Activated CD4-positive, alpha-beta T cell treated with anti-CD3 and anti-CD28 coated beads, Interleukin-2, amount 10 ng/mL, durations not matched to agents 24 days and 14 days (primary cell): ENCODE measurements at regions of chr3 and their contacts with region 1.

Region 1: GRCh38 chr3:17151598-17152373 is 267.0 kb downstream of the PLCL2 start:
- DNase-seq: peak; percentile 97
- H3K4me3 Mint-ChIP-seq: peak overlapping the region; percentile 80
- H3K27ac Mint-ChIP-seq: peak overlapping the region; percentile 93
- H3K4me1 Mint-ChIP-seq: peaks cover 66% of the 10 kb centered on the region
- H3K27me3 Mint-ChIP-seq: no peaks in the 10 kb centered on the region

Region 2: GRCh38 chr3:16906682-16907081 is 245.1 kb before region 1 on chr3:
- intact Hi-C with region 1: loop called (anchors 5 kb)
- DNase-seq: peak; percentile 75
- H3K4me3 Mint-ChIP-seq: peak overlapping the region; percentile 38
- H3K27ac Mint-ChIP-seq: no peak overlapping the region
- H3K4me1 Mint-ChIP-seq: peaks cover 61% of the 10 kb centered on the region
- H3K27me3 Mint-ChIP-seq: no peaks in the 10 kb centered on the region

Region 3: DNA sequence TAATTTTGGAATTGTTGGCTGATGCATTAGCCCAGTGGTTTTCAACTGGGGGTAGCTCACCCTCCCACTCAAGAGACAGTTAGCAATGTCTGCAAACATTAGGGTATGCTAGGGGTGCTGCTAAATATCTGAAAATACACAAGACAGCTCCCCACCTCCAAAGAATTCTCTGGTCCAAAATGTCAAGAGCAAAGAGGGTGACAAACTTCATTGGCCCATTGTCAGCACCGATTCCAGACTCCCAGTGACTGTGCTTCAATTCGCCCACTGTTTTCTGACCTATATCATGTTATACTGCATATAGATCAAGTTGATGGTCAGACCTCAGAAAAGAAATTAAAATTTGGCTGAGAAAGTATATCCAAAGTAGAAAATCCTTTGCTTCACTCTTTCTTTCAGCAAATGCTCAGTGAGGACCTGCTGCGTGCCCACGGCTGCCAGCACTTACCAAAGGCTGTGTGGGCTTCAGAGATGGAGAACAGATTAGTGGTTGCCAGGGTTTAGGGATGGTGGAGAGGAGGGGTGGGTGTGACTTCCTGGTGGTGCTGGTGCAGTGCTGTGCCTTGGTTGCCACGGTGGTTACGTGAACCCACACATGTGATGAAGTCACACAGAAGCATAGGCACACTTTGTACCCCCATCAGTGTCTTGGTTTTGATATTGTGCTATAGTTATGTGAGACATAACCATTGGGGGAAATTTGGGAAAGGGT is 63.0 kb before region 1 on chr3:
- intact Hi-C with region 1: loop called (anchors 5 kb)
- DNase-seq: peak; percentile 73
- H3K4me3 Mint-ChIP-seq: peak overlapping the region; percentile 20
- H3K27ac Mint-ChIP-seq: no peak overlapping the region
- H3K4me1 Mint-ChIP-seq: peaks cover 34% of the 10 kb centered on the region
- H3K27me3 Mint-ChIP-seq: no peaks in the 10 kb centered on the region

Region 4: DNA sequence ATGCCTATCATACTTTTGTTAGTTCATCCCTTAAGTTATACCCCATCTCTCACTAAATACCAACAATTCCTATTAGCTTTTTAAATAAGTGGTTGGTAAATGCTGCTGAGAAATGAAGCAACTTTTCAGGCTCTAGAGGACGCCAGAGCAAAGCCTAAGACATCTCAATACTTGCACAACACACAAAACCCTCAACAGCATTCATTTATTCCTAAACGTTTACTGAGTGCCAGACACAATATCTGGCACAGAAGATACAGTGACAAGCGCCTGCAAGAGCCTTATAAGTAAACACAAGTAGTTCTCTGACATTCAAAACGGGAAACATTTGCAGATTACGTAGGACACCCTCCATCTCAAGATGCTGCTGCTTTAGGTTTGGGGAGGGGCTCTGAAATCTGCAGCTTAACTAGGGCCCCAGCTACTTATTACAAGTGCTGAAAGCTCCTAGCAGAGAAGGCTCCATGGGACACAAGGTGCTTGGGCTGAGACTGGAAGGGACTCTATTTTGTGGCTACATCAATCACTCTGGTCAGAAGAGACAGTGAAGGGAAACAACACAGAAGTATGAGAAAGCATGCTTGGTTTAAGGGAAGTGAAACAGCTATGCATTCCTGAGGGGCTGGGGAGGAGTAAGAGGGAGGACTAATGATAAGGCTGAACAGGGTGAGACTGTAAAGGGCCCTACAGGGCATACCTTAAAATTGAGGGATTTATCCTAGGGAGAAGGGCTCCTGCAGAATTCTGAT is 44.2 kb after region 1 on chr3:
- intact Hi-C with region 1: loop called (anchors 5 kb)
- DNase-seq: peak; percentile 44
- H3K4me3 Mint-ChIP-seq: no peak overlapping the region
- H3K27ac Mint-ChIP-seq: no peak overlapping the region
- H3K4me1 Mint-ChIP-seq: peaks cover 13% of the 10 kb centered on the region
- H3K27me3 Mint-ChIP-seq: no peaks in the 10 kb centered on the region

Region 5: GRCh38 chr3:17742108-17742879 is 590.5 kb after region 1 on chr3 and contains the start of gene TBC1D5:
- intact Hi-C with region 1: loop called (anchors 10 kb)
- DNase-seq: peak; percentile 97
- H3K4me3 Mint-ChIP-seq: peak within 1 kb of the TSS; percentile 95
- H3K27ac Mint-ChIP-seq: peak within 1 kb of the TSS; percentile 98
- H3K4me1 Mint-ChIP-seq: peaks cover 34% of the 10 kb centered on the region
- H3K27me3 Mint-ChIP-seq: no peaks in the 10 kb centered on the region
- total RNA-seq, gene TBC1D5: 38.5 and 39.0 TPM in 2 replicates